CD4-positive, alpha-beta memory T cell (primary cell): ENCODE measurements at regions of chr6 and their contacts with region 1.

Region 1: DNA sequence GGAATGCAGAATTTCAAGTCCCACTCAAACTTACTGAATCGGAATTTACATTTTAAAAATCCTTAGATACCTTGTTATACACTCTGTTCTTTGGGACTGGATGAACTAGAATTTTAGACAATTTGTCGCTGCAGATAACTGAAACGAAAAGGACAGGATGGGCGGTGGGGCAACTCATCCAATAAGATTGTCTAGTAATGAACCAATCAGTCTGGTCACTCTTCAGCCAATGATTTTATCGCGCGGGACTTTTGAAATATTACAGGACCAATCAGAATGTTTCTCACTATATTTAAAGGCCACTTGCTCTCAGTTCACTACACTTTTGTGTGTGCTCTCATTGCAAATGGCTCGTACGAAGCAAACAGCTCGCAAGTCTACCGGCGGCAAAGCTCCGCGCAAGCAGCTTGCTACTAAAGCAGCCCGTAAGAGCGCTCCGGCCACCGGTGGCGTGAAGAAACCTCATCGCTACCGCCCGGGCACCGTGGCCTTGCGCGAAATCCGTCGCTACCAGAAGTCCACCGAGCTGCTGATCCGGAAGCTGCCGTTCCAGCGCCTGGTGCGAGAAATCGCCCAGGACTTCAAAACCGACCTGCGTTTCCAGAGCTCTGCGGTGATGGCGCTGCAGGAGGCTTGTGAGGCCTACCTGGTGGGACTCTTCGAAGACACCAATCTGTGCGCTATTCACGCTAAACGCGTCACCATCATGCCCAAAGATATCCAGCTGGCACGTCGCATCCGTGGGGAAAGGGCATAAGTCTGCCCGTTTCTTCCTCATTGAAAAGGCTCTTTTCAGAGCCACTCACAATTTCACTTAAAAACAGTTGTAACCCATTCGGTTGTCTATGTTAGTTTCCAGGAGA is 41.9 kb upstream of the HFE start:
- DNase-seq: peak; percentile 88 to 91 (median 90)
- H3K4me3 ChIP-seq: peak overlapping the region; percentile 72 to 74
- H3K4me3 Mint-ChIP-seq: peak overlapping the region; percentile 88 to 98 (median 94)
- H3K27ac ChIP-seq: peak overlapping the region; percentile 76
- H3K27ac Mint-ChIP-seq: peak overlapping the region; percentile 93 to 99 (median 98)
- H3K4me1 ChIP-seq: peaks cover 14% of the 10 kb centered on the region
- H3K4me1 Mint-ChIP-seq: peaks cover 12 to 28% (median 20%) of the 10 kb centered on the region in 4 donors
- H3K27me3 ChIP-seq: no peaks in the 10 kb centered on the region
- H3K27me3 Mint-ChIP-seq: no peaks in the 10 kb centered on the region

Region 2: GRCh38 chr6:25992413-25993037 is 52.8 kb before region 1 on chr6:
- CTCF ChIA-PET with region 1: no interaction called
- POLR2A ChIA-PET with region 1: interaction called, 11 read pairs
- intact Hi-C with region 1: no loop called
- DNase-seq: peak; percentile 85 to 94 (median 89)
- H3K4me3 ChIP-seq: peak overlapping the region; percentile 72 to 95
- H3K4me3 Mint-ChIP-seq: peak overlapping the region; percentile 91 to 95 (median 94)
- H3K27ac ChIP-seq: peak overlapping the region; percentile 64
- H3K27ac Mint-ChIP-seq: peak overlapping the region; percentile 89 to 96 (median 94)
- H3K4me1 ChIP-seq: no peaks in the 10 kb centered on the region
- H3K4me1 Mint-ChIP-seq: peaks cover 9 to 23% (median 16%) of the 10 kb centered on the region in 4 donors
- H3K27me3 ChIP-seq: no peaks in the 10 kb centered on the region
- H3K27me3 Mint-ChIP-seq: no peaks in the 10 kb centered on the region

Region 3: DNA sequence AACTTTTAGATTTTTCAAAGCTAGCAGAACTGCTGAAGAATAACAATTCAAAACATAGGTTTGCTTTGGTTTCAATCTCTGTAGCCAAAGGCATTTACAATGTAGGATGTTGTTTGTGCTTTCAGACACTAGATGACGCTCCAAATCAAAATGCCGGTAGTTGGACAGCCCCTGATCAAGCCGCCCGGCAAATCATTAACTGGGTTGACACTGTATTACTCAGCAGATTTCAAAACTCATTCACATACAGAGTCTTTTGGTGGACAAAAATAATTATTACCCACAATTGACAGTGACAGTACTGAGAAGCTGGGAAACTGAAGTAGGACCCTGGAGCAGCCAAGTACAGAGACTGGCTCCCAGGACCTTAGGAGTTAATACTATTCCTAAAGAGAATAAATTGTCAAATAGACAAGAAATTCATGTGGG is 20.7 kb after region 1 on chr6:
- CTCF ChIA-PET with region 1: interaction called, 22 read pairs
- POLR2A ChIA-PET with region 1: interaction called, 413 read pairs
- intact Hi-C with region 1: no loop called
- DNase-seq: peak; percentile 70 to 76 (median 71)
- H3K4me3 ChIP-seq: no peak overlapping the region
- H3K4me3 Mint-ChIP-seq: no peak overlapping the region
- H3K27ac ChIP-seq: no peak overlapping the region
- H3K27ac Mint-ChIP-seq: peak overlapping the region in 1 of 7 donors; percentile 30
- H3K4me1 ChIP-seq: no peaks in the 10 kb centered on the region
- H3K4me1 Mint-ChIP-seq: peaks cover 4 to 12% (median 7%) of the 10 kb centered on the region in 4 donors
- H3K27me3 ChIP-seq: no peaks in the 10 kb centered on the region
- H3K27me3 Mint-ChIP-seq: peaks cover 0 to 4% of the 10 kb centered on the region in 2 donors

Region 4: GRCh38 chr6:26103770-26104456 is 58.6 kb after region 1 on chr6:
- CTCF ChIA-PET with region 1: interaction called, 29 read pairs
- POLR2A ChIA-PET with region 1: interaction called, 65 read pairs
- intact Hi-C with region 1: loop called (anchors 1 kb)
- DNase-seq: peak; percentile 93 to 96 (median 94)
- H3K4me3 ChIP-seq: peak overlapping the region; percentile 36 to 39
- H3K4me3 Mint-ChIP-seq: peak overlapping the region; percentile 84 to 96 (median 92)
- H3K27ac ChIP-seq: peak overlapping the region; percentile 66
- H3K27ac Mint-ChIP-seq: peak overlapping the region; percentile 96 to 100 (median 99)
- H3K4me1 ChIP-seq: peaks cover 17% of the 10 kb centered on the region
- H3K4me1 Mint-ChIP-seq: peaks cover 11 to 19% (median 15%) of the 10 kb centered on the region in 4 donors
- H3K27me3 ChIP-seq: no peaks in the 10 kb centered on the region
- H3K27me3 Mint-ChIP-seq: peaks cover 2 to 6% of the 10 kb centered on the region in 2 donors

Region 5: GRCh38 chr6:26196846-26197648 is 151.8 kb after region 1 on chr6:
- CTCF ChIA-PET with region 1: no interaction called
- POLR2A ChIA-PET with region 1: interaction called, 120 read pairs
- intact Hi-C with region 1: no loop called
- DNase-seq: peak; percentile 92 to 93 (median 92)
- H3K4me3 ChIP-seq: peak overlapping the region; percentile 83 to 97
- H3K4me3 Mint-ChIP-seq: peak overlapping the region; percentile 94 to 99 (median 97)
- H3K27ac ChIP-seq: peak overlapping the region; percentile 84
- H3K27ac Mint-ChIP-seq: peak overlapping the region; percentile 96 to 100 (median 98)
- H3K4me1 ChIP-seq: peaks cover 43% of the 10 kb centered on the region
- H3K4me1 Mint-ChIP-seq: peaks cover 23 to 57% (median 41%) of the 10 kb centered on the region in 4 donors
- H3K27me3 ChIP-seq: no peaks in the 10 kb centered on the region
- H3K27me3 Mint-ChIP-seq: no peaks in the 10 kb centered on the region

Region 6: GRCh38 chr6:26234421-26235296 is 189.4 kb after region 1 on chr6:
- CTCF ChIA-PET with region 1: no interaction called
- POLR2A ChIA-PET with region 1: interaction called, 30 read pairs
- intact Hi-C with region 1: no loop called
- DNase-seq: peak; percentile 70 to 87 (median 85)
- H3K4me3 ChIP-seq: peak overlapping the region; percentile 66 to 95
- H3K4me3 Mint-ChIP-seq: peak overlapping the region; percentile 93 to 99 (median 96)
- H3K27ac ChIP-seq: peak overlapping the region; percentile 83
- H3K27ac Mint-ChIP-seq: peak overlapping the region; percentile 90 to 99 (median 96)
- H3K4me1 ChIP-seq: peaks cover 23% of the 10 kb centered on the region
- H3K4me1 Mint-ChIP-seq: peaks cover 18 to 43% (median 26%) of the 10 kb centered on the region in 4 donors
- H3K27me3 ChIP-seq: no peaks in the 10 kb centered on the region
- H3K27me3 Mint-ChIP-seq: no peaks in the 10 kb centered on the region

Region 7: DNA sequence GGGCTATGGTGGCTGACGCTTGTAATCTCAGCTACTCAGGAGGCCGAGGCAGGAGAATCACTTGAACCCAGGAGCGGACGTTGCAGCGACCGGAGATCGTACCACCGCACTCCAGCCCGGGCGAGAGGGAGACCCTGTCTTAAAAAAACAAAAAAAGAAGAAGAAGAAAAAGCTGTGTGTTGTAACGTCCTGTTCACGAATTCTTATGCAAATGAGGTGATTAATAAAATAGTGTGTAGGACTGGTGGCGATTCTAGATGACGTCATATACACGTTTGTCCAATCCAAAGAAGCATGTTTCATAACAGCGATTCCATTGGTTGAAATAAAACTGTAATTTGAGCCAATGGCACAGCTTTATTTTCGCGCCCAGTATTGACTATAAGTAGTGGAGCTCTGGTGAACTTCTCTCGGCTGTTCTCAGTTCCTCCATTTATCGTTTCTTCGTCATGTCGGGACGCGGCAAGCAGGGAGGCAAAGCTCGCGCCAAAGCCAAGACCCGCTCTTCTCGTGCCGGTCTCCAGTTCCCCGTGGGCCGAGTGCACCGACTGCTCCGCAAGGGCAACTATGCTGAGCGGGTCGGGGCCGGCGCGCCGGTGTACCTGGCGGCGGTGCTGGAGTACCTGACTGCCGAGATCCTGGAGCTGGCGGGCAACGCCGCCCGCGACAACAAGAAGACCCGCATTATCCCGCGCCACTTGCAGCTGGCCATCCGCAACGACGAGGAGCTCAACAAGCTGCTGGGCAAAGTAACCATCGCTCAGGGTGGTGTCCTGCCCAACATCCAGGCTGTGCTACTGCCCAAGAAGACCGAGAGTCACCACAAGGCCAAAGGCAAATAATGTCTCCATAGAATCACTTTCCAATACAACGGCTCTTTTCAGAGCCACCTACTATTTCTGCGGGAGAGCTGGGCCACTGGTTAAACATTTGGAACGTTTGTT is 1819.9 kb after region 1 on chr6:
- CTCF ChIA-PET with region 1: no interaction called
- POLR2A ChIA-PET with region 1: interaction called, 35 read pairs
- intact Hi-C with region 1: no loop called
- DNase-seq: peak; percentile 86 to 93 (median 91)
- H3K4me3 ChIP-seq: peak overlapping the region; percentile 33 to 69
- H3K4me3 Mint-ChIP-seq: peak overlapping the region; percentile 96 to 99 (median 99)
- H3K27ac ChIP-seq: peak overlapping the region; percentile 62
- H3K27ac Mint-ChIP-seq: peak overlapping the region; percentile 94 to 99 (median 98)
- H3K4me1 ChIP-seq: peaks cover 31% of the 10 kb centered on the region
- H3K4me1 Mint-ChIP-seq: peaks cover 18 to 46% (median 34%) of the 10 kb centered on the region in 4 donors
- H3K27me3 ChIP-seq: no peaks in the 10 kb centered on the region
- H3K27me3 Mint-ChIP-seq: no peaks in the 10 kb centered on the region